Activated CD8-positive, alpha-beta memory T cell treated with anti-CD3 and anti-CD28 coated beads, Interleukin-2, amount 10 ng/mL, durations not matched to agents 7 days and 5 days (primary cell): ENCODE measurements at regions of chr16 and their contacts with region 1.

Region 1: DNA sequence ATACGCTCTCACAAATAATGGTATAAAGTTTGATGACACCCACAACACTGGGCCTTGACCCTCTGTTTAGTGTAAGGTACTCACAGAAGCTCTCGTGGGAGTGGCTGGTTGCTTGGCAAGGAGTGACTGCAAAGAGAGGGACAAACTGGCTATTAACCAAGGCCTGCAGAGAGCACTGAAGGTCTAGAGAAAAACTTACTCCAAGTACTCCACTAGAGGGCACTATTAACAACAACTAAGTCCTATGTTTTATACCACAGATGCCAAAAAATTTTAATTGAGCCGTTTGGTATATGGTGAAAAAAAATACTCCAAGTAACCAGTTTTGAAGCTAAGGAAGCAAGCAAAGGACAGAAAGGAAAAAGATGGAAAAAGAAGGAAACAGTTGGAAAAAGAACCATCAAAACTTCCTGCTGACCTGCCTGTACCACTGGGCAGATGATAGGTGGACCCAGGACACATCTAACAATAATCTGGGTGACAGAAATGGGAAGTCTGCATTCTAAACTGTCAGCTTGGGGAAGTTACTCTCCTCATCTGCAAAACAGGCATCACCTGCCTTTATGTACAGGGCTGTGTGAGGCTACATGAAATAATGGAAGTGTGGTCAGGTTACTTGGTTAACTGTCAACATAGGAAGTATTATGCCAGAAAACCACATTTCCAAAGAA is 23.2 kb downstream of the DYNC1LI2 start:
- DNase-seq: no peak
- ATAC-seq: peak; percentile 85
- H3K4me3 Mint-ChIP-seq: no peak overlapping the region
- H3K27ac Mint-ChIP-seq: peak overlapping the region; percentile 42
- H3K4me1 Mint-ChIP-seq: peaks cover 17% of the 10 kb centered on the region
- H3K27me3 Mint-ChIP-seq: no peaks in the 10 kb centered on the region

Region 2: DNA sequence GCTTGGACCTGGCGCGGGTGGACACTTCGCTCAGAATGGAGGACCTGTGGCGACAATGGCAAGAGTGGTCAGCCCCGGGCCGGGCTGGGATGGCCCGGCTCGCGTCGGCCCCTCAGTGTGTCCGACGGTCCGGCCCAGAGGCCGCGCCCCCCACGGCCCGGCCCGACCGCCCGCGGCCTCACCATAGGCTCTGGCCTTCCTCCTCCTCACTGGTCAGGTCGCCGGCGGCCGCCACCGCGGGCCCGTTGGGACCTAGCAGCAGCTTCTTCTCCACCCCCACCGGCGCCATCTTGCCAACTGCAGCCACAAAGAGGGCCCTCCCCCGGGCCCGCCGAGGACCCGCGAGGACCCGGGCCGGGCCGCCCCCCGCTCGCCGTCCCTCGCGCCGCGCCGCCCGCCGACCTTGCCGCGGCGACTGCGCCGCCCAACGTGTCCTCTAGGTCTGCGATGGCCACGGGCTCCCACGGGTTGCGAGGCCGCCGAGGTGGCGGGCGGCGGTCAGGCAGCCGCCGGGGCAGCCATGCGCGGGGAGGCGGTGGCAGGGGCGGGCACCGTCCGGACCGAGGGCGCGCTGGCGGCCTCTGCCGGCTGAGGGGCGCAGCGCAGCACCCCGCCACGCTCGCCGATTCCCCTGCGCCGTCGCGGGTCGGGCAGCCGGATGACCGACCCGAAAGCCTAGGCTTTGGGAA is 23.2 kb after region 1 on chr16 and contains the start of gene DYNC1LI2:
- CTCF ChIA-PET with region 1: interaction called, 50 read pairs
- DNase-seq: peak; percentile 86
- ATAC-seq: peak; percentile 87
- H3K4me3 Mint-ChIP-seq: peak within 1 kb of the TSS; percentile 85
- H3K27ac Mint-ChIP-seq: peak within 1 kb of the TSS; percentile 86
- H3K4me1 Mint-ChIP-seq: peaks cover 46% of the 10 kb centered on the region
- H3K27me3 Mint-ChIP-seq: peaks cover 24% of the 10 kb centered on the region
- total RNA-seq, gene DYNC1LI2: 71.6 to 81.0 TPM

Region 3: GRCh38 chr16:66810391-66810790 is 82.1 kb after region 1 on chr16:
- CTCF ChIA-PET with region 1: no interaction called
- DNase-seq: no peak
- ATAC-seq: no peak
- H3K4me3 Mint-ChIP-seq: no peak overlapping the region
- H3K27ac Mint-ChIP-seq: no peak overlapping the region
- H3K4me1 Mint-ChIP-seq: no peaks in the 10 kb centered on the region
- H3K27me3 Mint-ChIP-seq: no peaks in the 10 kb centered on the region